ENCODE measurements at regions of chr3 and their contacts with region 1.

Region 1: DNA sequence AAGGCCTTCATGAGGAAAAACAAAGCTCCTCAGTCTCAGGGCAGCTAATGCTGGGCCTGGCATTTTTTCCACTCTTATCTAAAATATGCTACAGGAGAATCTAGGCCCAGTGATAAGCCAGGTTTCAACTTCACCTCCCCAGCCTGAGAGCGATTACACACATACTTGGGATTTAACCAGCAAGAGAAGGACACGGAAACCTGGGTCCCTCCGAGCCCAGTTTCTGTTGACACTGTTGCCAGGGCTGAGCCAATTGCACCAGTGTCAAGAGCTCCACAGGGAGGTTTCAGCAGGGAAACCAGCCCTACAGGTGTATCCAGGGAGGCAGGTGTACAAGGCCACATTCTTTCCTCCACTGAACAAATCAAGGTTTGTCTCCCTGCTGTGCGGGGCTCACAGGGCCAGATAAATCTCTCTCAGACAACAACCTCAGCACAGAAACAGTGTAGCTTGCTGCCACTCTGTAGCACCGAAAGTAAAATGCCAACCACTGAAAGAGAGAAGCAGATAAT is 85.4 kb downstream of the MAGI1 start:
- DNase-seq: peak; percentile 93 to 98
- H3K4me3 ChIP-seq: peak overlapping the region; percentile 31
- H3K27ac ChIP-seq: peak overlapping the region; percentile 100
- H3K4me1 ChIP-seq: peaks cover 65% of the 10 kb centered on the region
- H3K27me3 ChIP-seq: no peaks in the 10 kb centered on the region
- CTCF ChIP-seq: no peak

Region 2: DNA sequence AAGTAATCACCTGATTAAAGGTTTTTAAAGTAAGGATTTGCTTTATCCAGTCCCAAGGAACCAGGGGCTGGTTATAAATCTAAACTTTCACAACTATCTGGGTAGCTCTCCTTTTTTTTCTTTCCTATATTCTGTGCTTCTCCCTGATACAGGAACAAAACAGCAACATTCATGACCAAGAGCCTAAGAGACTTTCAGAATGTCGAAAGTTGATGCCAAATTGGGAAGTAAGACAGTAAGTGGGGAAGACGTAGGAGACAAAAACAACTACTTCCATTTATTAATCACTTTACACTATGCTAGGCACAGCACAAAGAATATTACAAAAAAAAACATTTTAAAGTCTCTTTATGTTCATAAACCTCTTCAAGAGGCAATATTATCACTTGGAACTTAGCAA is 126.3 kb before region 1 on chr3:
- CTCF ChIA-PET with region 1: no interaction called
- POLR2A ChIA-PET with region 1: no interaction called
- intact Hi-C with region 1: no loop called
- DNase-seq: no peak
- H3K4me3 ChIP-seq: no peak overlapping the region
- H3K27ac ChIP-seq: no peak overlapping the region
- H3K4me1 ChIP-seq: peaks cover 7% of the 10 kb centered on the region
- H3K27me3 ChIP-seq: no peaks in the 10 kb centered on the region
- CTCF ChIP-seq: no peak

Region 3: DNA sequence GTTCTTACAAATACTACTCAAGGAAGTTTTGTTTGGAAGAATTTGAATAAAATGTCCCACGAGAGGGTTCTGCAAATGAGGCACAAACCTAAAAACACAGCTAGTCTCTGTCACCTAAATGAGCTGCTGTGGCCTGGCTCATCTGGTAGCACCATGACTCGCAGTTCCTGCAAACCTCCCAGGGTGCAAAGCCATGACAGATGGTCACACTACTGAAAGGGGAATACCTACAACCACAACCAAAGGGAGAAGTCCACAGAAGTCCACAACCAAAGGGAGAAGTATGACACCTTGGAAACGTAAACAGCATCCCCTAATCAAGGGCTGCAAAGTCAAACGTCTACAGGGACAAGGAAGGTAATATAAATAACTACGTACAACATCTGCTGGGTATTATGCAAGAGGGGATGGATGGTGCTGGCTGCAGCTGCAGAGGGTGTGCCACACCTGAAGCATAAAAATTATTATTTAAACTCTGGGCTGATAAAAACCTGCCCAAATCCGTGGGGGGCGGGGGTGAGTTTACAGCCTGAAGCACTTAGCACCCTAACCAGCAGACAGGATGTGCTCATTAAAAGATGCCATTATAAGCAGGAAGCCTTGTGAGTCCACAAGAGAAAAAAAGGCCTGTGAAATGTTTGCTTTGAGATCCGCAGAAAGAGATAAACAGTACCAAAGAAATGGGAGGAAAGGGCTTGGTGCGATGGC is 98.6 kb before region 1 on chr3:
- CTCF ChIA-PET with region 1: no interaction called
- POLR2A ChIA-PET with region 1: no interaction called
- intact Hi-C with region 1: loop called (anchors 5 kb)
- DNase-seq: peak; percentile 62 to 90
- H3K4me3 ChIP-seq: no peak overlapping the region
- H3K27ac ChIP-seq: peak overlapping the region; percentile 47
- H3K4me1 ChIP-seq: peaks cover 56% of the 10 kb centered on the region
- H3K27me3 ChIP-seq: no peaks in the 10 kb centered on the region
- CTCF ChIP-seq: no peak

Region 4: GRCh38 chr3:65971293-65972252 is 18.2 kb after region 1 on chr3:
- CTCF ChIA-PET with region 1: no interaction called
- POLR2A ChIA-PET with region 1: no interaction called
- intact Hi-C with region 1: no loop called
- DNase-seq: no peak
- H3K4me3 ChIP-seq: no peak overlapping the region
- H3K27ac ChIP-seq: no peak overlapping the region
- H3K4me1 ChIP-seq: no peaks in the 10 kb centered on the region
- H3K27me3 ChIP-seq: no peaks in the 10 kb centered on the region
- CTCF ChIP-seq: no peak

Region 5: DNA sequence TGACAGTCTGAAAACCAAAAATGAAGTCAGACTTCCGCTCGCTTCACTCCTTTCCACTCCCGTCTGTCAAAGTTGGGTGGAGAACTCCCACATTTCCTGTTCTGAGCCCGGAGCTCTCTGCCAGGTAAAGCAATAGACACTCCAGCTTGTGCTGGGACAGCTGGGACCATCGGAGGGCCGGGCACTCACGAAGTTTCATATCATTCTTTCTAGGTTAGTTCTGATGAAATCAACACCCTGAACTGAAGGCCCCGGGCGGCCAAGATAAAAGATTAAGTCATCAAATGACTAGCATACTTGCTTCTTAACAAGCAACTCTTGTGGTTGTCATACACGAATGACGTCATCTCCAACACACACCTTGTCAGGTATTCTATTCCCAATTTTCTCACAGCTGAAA is 43.2 kb after region 1 on chr3:
- CTCF ChIA-PET with region 1: no interaction called
- POLR2A ChIA-PET with region 1: interaction called, 25 read pairs
- intact Hi-C with region 1: loop called (anchors 1 kb)
- DNase-seq: peak; percentile 80 to 96
- H3K4me3 ChIP-seq: peak overlapping the region; percentile 17; the same call in 1 of the 2 replicates
- H3K27ac ChIP-seq: peak overlapping the region; percentile 75
- H3K4me1 ChIP-seq: peaks cover 25% of the 10 kb centered on the region
- H3K27me3 ChIP-seq: no peaks in the 10 kb centered on the region
- CTCF ChIP-seq: no peak

Region 6: GRCh38 chr3:66038726-66039589 is 85.6 kb after region 1 on chr3 and contains the start of gene MAGI1:
- CTCF ChIA-PET with region 1: no interaction called
- POLR2A ChIA-PET with region 1: interaction called, 8 read pairs
- intact Hi-C with region 1: loop called (anchors 1 kb)
- DNase-seq: peak; percentile 75 to 94
- H3K4me3 ChIP-seq: peak within 1 kb of the TSS; percentile 82
- H3K27ac ChIP-seq: peak within 1 kb of the TSS; percentile 77
- H3K4me1 ChIP-seq: peaks cover 28% of the 10 kb centered on the region
- H3K27me3 ChIP-seq: no peaks in the 10 kb centered on the region
- CTCF ChIP-seq: no peak
- total RNA-seq, gene MAGI1: 23.3 and 24.1 TPM in 2 replicates

Region 7: GRCh38 chr3:66138336-66139313 is 185.3 kb after region 1 on chr3:
- CTCF ChIA-PET with region 1: no interaction called
- POLR2A ChIA-PET with region 1: no interaction called
- intact Hi-C with region 1: loop called (anchors 2 kb)
- DNase-seq: peak; percentile 53 to 57
- H3K4me3 ChIP-seq: no peak overlapping the region
- H3K27ac ChIP-seq: no peak overlapping the region
- H3K4me1 ChIP-seq: peaks cover 14% of the 10 kb centered on the region
- H3K27me3 ChIP-seq: no peaks in the 10 kb centered on the region
- CTCF ChIP-seq: peak; percentile 77

Measured in PC-9 (cell line).